Activated T-helper 1 cell treated with anti-CD3 and anti-CD28 coated beads, Interleukin-12 subunit alpha, Interleukin-12 subunit beta, Interleukin-2, Interleukin-4 antibody, amounts not matched to agents 30 ng/mL and 10 ng/mL and 1 ng/mL, durations not matched to agents 14 hours and 24 hours and 36 hours (primary cell): ENCODE measurements at regions of chr11 and their contacts with region 1.

Region 1: DNA sequence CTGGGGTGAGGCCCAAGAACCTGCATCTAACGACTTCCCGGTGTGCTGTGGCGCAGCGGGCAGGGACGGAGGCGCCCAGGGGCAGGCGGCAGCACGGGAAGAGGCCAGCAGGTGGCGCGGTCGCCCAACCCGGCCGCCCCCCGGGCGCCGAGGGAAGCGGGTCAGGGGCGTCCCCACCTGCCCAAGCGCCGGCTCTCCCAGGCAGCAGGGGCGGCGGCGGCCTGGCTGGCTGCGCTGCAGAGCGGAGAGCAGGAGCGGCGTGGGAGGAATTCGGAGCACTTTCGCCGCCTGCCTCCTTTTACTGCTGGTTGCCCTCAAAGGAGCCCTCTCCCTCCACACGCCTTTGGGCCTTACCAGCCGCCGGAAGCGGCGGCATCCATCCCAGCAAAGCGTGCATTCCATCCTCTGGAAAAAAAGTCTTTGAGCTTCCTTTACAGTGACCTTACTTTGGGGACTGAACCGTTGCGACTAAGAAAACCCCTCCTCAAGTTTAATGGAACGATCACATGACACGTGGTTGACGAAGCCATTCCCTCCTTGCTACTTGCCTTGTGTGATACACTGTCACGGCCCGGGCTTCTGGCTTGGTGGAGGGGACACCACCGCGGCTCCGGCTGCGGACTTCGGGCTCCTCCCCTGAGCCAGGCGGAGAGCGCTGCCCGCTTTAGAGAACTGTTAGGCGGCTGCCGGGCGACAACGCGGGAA is 106.8 kb upstream of the CLMP start:
- DNase-seq: peak; percentile 72
- H3K4me3 Mint-ChIP-seq: peak overlapping the region; percentile 79
- H3K27ac Mint-ChIP-seq: peak overlapping the region; percentile 92
- H3K4me1 Mint-ChIP-seq: peaks cover 52% of the 10 kb centered on the region
- H3K27me3 Mint-ChIP-seq: peaks cover 3% of the 10 kb centered on the region

Region 2: DNA sequence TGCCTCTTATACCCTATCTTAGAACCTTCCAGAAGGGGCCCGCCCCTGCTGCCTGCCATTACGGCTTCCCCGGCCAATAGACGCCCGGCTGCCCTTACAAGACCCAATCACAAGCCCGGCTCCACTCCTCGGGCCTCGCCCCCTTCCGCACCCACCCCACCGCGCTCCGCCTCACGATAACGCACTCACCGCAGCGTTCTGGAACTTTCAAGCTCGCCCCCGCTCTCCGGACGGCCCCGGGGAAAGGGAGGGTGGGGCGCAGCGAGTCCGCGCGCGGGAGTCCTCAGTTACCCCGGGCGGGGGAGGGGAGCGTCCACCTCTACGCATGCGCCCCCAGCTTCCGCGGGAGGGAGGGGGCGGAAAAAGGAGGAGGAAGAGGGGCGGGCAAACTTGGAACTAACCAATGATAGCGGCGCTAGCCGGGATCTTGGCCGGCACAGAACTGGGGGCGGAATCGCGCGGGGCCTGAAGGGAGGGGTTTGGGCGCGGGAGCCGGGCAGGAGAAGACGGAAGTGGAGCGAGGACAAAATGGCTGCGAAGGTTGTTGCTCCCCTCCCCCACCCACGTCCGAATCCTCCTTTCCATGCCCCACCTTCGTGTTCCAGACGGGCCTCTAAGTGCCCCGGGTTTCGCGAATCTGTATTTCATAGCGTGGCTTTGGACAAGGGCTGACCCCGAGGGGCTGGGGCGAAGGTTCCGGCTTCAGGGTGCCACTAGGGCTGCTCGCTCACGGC is 239.5 kb before region 1 on chr11:
- intact Hi-C with region 1: loop called (anchors 2 kb)
- DNase-seq: peak; percentile 99
- H3K4me3 Mint-ChIP-seq: peak overlapping the region; percentile 98
- H3K27ac Mint-ChIP-seq: peak overlapping the region; percentile 100
- H3K4me1 Mint-ChIP-seq: peaks cover 43% of the 10 kb centered on the region
- H3K27me3 Mint-ChIP-seq: peaks cover 2% of the 10 kb centered on the region

Region 3: GRCh38 chr11:123357961-123358841 is 56.4 kb after region 1 on chr11:
- intact Hi-C with region 1: loop called (anchors 1 kb)
- DNase-seq: peak; percentile 53
- H3K4me3 Mint-ChIP-seq: peak overlapping the region; percentile 99
- H3K27ac Mint-ChIP-seq: peak overlapping the region; percentile 97
- H3K4me1 Mint-ChIP-seq: peaks cover 77% of the 10 kb centered on the region
- H3K27me3 Mint-ChIP-seq: no peaks in the 10 kb centered on the region

Region 4: GRCh38 chr11:123407130-123407995 is 105.5 kb after region 1 on chr11:
- intact Hi-C with region 1: loop called (anchors 1 kb)
- DNase-seq: peak; percentile 20
- H3K4me3 Mint-ChIP-seq: peak overlapping the region; percentile 77
- H3K27ac Mint-ChIP-seq: peak overlapping the region; percentile 90
- H3K4me1 Mint-ChIP-seq: peaks cover 70% of the 10 kb centered on the region
- H3K27me3 Mint-ChIP-seq: no peaks in the 10 kb centered on the region

Region 5: GRCh38 chr11:123454060-123454651 is 152.3 kb after region 1 on chr11:
- intact Hi-C with region 1: loop called (anchors 1 kb)
- DNase-seq: peak; percentile 74
- H3K4me3 Mint-ChIP-seq: peak overlapping the region; percentile 82
- H3K27ac Mint-ChIP-seq: peak overlapping the region; percentile 97
- H3K4me1 Mint-ChIP-seq: peaks cover 98% of the 10 kb centered on the region
- H3K27me3 Mint-ChIP-seq: no peaks in the 10 kb centered on the region

Region 6: GRCh38 chr11:123560006-123560405 is 258.2 kb after region 1 on chr11:
- intact Hi-C with region 1: loop called (anchors 1 kb)
- DNase-seq: peak; percentile 24
- H3K4me3 Mint-ChIP-seq: peak overlapping the region; percentile 65
- H3K27ac Mint-ChIP-seq: peak overlapping the region; percentile 57
- H3K4me1 Mint-ChIP-seq: peaks cover 28% of the 10 kb centered on the region
- H3K27me3 Mint-ChIP-seq: no peaks in the 10 kb centered on the region

Region 7: GRCh38 chr11:123659311-123659710 is 357.5 kb after region 1 on chr11:
- intact Hi-C with region 1: no loop called
- DNase-seq: no peak
- H3K4me3 Mint-ChIP-seq: no peak overlapping the region
- H3K27ac Mint-ChIP-seq: no peak overlapping the region
- H3K4me1 Mint-ChIP-seq: peaks cover 22% of the 10 kb centered on the region
- H3K27me3 Mint-ChIP-seq: peaks cover 20% of the 10 kb centered on the region

Region 8: DNA sequence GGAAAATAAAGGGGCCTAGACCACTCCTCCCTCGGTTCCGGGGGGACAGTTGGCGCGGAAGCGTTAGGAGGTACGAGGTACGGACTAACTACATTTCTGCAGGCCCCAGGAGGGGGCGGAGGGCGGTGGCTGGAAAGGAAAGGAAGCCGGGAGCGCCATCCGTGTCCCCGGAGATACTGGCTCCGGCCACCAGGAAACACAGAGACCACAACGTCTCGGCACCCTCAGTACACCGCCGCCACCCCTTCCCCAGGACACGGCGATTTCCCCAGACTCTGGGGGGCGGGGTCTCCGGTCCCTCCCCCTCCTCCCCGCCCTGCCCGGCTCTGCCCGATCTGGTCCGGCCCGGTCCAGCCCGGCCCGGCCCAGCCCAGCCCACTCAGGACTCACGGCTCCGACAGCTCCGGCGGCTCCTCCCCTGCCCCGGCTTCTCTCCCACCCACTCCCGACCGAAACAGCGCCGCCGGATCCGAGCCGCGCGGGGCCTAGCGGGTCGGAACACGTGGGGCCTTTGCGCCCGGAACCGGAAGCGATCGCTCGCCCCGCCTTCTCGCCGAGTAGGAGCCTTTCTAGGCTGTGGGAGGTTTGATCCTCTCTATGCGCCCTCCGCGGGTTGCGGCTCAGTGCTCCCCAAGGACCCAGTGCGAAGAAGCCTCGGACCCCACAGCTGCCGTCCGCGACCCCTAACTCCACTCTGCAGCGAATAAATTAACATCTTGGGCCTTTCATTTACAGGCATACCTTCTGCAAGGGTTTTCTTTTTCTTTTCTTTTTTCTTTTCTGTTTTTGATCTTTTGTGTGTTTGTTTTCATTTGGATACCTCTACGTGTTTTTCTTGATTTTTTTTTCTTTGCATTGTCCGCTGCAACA is 439.5 kb after region 1 on chr11 and contains the start of gene ZNF202:
- intact Hi-C with region 1: loop called (anchors 5 kb)
- DNase-seq: peak; percentile 87
- H3K4me3 Mint-ChIP-seq: peak within 1 kb of the TSS; percentile 96
- H3K27ac Mint-ChIP-seq: peak within 1 kb of the TSS; percentile 93
- H3K4me1 Mint-ChIP-seq: peaks cover 37% of the 10 kb centered on the region
- H3K27me3 Mint-ChIP-seq: peaks cover 7% of the 10 kb centered on the region
- total RNA-seq, gene ZNF202: 26.6 and 27.5 TPM in 2 replicates